A673 (cell line): ENCODE measurements at regions of chr6 and their contacts with region 1.

Region 1: DNA sequence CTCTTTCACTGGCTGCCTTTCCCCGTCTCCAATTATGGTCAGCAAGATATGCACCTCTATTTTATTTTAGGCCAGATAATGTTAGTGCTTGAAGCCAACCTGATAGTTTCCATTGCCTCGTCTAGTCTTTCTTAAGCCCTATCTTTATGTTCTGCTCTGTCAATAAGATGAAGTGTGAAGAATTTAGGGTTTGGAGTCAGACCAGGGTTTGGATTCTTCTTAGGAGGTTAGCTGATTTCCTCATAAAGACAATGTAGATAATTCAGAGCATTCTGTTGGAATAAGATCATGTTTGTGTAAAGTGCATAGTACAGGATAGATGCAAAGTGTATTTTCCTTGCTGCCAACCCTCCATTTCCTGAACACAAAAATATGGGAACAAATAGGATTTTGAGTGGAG is 43.8 kb downstream of the PKIB start:
- DNase-seq: no peak
- H3K4me3 ChIP-seq: no peak overlapping the region
- H3K27ac ChIP-seq: no peak overlapping the region
- H3K4me1 ChIP-seq: peaks cover 18% of the 10 kb centered on the region
- H3K27me3 ChIP-seq: no peaks in the 10 kb centered on the region
- CTCF ChIP-seq: no peak

Region 2: GRCh38 chr6:122511193-122511924 is 142.7 kb before region 1 on chr6:
- CTCF ChIA-PET with region 1: no interaction called
- POLR2A ChIA-PET with region 1: no interaction called
- intact Hi-C with region 1: no loop called
- DNase-seq: no peak
- H3K4me3 ChIP-seq: no peak overlapping the region
- H3K27ac ChIP-seq: no peak overlapping the region
- H3K4me1 ChIP-seq: no peaks in the 10 kb centered on the region
- H3K27me3 ChIP-seq: no peaks in the 10 kb centered on the region
- CTCF ChIP-seq: no peak

Region 3: GRCh38 chr6:122681705-122682104 is 27.7 kb after region 1 on chr6:
- CTCF ChIA-PET with region 1: no interaction called
- POLR2A ChIA-PET with region 1: no interaction called
- intact Hi-C with region 1: loop called (anchors 1 kb)
- DNase-seq: peak; percentile 15
- H3K4me3 ChIP-seq: no peak overlapping the region
- H3K27ac ChIP-seq: no peak overlapping the region
- H3K4me1 ChIP-seq: peaks cover 3% of the 10 kb centered on the region
- H3K27me3 ChIP-seq: no peaks in the 10 kb centered on the region
- CTCF ChIP-seq: no peak